GM13977 (cell line): ENCODE measurements at regions of chr9 and their contacts with region 1.

Region 1: GRCh38 chr9:7045361-7045760 is 287.6 kb downstream of the KDM4C start:
- DNase-seq: no peak
- CTCF ChIP-seq: no peak

Region 2: DNA sequence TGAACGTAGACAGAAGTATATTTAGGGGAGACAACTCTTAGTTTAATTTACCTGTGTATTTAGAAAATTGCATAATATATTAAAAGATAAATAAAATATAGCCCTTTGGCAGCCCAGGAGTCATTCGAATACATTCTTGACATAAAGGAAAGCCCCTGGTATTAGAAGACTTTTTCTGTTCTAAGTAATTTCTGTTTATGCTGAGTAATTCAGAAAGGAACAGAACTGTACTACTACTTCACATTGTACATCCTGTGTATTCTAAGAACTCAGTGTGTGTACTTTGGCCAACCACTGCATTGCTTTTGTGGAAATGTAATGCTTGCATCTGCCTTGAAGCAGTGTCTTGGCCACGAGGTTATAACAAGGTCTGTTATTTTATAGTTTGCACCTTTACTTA is 151.2 kb before region 1 on chr9:
- in situ Hi-C with region 1: loop called (anchors 10 kb)
- DNase-seq: peak; percentile 55
- CTCF ChIP-seq: no peak